Thyroid gland (tissue), 4 donors: ENCODE measurements at regions of chr3 and their contacts with region 1.

Region 1: GRCh38 chr3:44104668-44105321 is 136.9 kb upstream of the TOPAZ1 start:
- DNase-seq: peak; percentile 67 to 72
- H3K4me3 ChIP-seq: no peak overlapping the region
- H3K27ac ChIP-seq: peak overlapping the region; percentile 11 to 98 (median 61)
- H3K4me1 ChIP-seq: peaks cover 53 to 68% of the 10 kb centered on the region in 2 donors
- H3K27me3 ChIP-seq: no peaks in the 10 kb centered on the region
- CTCF ChIP-seq: no peak
- POLR2A ChIP-seq: no peak

Region 2: GRCh38 chr3:43742920-43743319 is 361.9 kb before region 1 on chr3:
- intact Hi-C with region 1: no loop called
- DNase-seq: peak; percentile 37 to 49
- H3K4me3 ChIP-seq: no peak overlapping the region
- H3K27ac ChIP-seq: no peak overlapping the region
- H3K4me1 ChIP-seq: peaks cover 9 to 29% of the 10 kb centered on the region in 2 donors
- H3K27me3 ChIP-seq: no peaks in the 10 kb centered on the region
- CTCF ChIP-seq: peak in 4 of 6 experiments; percentile 9 to 49 (median 29)
- POLR2A ChIP-seq: no peak

Region 3: GRCh38 chr3:44074181-44074580 is 30.6 kb before region 1 on chr3:
- intact Hi-C with region 1: loop called (anchors 5 kb)
- DNase-seq: no peak
- H3K4me3 ChIP-seq: no peak overlapping the region
- H3K27ac ChIP-seq: no peak overlapping the region
- H3K4me1 ChIP-seq: peaks cover 51 to 67% of the 10 kb centered on the region in 2 donors
- H3K27me3 ChIP-seq: no peaks in the 10 kb centered on the region
- CTCF ChIP-seq: no peak
- POLR2A ChIP-seq: no peak